Posterior vena cava (tissue), 2 donors: ENCODE measurements at regions of chr2 and their contacts with region 1.

Region 1: GRCh38 chr2:183592271-183592785 is 468.1 kb downstream of the NUP35 start:
- DNase-seq: no peak

Region 2: DNA sequence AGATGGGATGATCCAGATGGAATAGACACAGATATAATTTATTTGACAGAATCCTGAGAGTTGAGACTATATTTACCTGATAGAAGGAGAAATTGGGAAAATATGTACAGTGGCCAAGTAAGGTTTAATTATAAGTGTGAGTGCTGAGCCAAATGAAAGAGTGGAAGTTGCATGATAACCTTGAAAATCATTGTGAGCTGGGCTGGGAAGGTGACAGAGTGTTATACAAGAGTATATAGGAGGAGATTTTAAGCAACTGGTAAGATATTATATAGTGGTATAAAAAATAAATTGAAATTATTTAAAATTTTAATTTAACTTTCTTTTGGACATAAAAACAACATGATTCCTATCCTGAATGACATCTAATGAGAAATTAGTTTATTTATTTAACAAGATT is 127.3 kb before region 1 on chr2:
- intact Hi-C with region 1: loop called in 1 of 2 experiments (anchors 5 kb)
- DNase-seq: no peak

Region 3: DNA sequence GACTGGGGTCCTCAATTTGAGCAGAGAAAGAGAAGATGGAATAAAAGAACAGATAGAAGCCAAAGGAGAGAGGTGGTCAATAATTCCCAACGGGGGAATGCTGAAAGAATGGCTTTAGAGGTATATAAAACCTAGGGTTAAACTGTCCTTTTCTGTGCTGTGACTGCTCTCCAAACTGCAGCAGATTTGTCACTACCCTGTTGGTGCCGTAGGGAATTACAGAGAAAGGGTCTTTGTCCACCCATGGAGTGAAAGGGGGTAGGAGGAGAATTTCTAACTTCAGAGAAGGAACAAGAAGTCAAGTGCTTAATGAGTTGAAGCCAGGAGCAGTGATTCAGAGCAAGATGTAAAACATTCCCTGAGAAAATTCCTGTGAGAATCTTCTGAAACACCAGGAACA is 18.4 kb after region 1 on chr2:
- intact Hi-C with region 1: no loop called
- DNase-seq: no peak